GM12878 (cell line): ENCODE measurements at regions of chr2 and their contacts with region 1.

Region 1: DNA sequence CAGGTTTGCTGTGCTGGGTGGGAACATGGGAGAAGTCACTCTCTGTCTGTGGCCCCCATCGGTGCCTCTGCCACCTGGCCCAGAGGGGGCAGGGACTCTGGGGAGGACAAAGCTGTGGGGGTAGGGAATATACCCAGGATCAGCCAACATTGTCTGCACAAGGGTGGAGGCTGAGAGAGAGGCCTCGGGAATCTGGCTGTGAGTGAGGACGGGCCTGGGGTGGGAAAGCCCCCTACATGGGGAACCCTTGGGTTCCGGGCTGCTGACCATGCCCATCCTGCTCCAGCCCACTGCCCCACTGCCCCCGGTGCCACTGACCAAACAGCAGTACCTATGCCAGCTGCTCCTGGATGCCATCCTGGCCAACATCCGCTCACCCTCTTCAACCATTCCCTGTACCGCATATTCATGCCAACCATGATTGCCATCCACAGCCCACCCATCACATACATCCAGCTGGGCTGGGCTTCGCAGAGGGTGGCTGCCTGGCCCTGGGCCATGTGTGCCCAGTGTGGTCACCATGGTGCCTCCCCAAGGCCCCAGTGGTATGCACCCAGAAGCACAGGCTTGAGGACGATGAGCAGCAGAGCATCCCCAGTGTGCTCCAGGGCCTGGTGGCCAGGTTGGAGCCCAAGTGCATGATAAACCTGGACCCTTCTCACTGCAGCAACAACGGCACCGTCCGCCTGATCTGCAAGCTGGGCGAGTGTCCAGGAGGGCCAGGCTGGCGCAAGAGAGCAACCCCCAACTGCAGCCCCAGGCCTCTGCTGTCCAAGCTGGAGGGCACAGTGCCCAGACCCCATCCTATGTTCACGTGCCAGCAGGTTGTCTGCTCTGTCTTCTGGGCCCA is 6.9 kb upstream of the POTEF start:
- DNase-seq: no peak
- ATAC-seq: no peak
- H3K4me3 ChIP-seq: no peak overlapping the region
- H3K27ac ChIP-seq: no peak overlapping the region
- H3K4me1 ChIP-seq: no peaks in the 10 kb centered on the region
- H3K27me3 ChIP-seq: no peaks in the 10 kb centered on the region
- CTCF ChIP-seq: no peak
- EP300 ChIP-seq: no peak
- POLR2A ChIP-seq: no peak
- RAD21 ChIP-seq: no peak

Region 2: DNA sequence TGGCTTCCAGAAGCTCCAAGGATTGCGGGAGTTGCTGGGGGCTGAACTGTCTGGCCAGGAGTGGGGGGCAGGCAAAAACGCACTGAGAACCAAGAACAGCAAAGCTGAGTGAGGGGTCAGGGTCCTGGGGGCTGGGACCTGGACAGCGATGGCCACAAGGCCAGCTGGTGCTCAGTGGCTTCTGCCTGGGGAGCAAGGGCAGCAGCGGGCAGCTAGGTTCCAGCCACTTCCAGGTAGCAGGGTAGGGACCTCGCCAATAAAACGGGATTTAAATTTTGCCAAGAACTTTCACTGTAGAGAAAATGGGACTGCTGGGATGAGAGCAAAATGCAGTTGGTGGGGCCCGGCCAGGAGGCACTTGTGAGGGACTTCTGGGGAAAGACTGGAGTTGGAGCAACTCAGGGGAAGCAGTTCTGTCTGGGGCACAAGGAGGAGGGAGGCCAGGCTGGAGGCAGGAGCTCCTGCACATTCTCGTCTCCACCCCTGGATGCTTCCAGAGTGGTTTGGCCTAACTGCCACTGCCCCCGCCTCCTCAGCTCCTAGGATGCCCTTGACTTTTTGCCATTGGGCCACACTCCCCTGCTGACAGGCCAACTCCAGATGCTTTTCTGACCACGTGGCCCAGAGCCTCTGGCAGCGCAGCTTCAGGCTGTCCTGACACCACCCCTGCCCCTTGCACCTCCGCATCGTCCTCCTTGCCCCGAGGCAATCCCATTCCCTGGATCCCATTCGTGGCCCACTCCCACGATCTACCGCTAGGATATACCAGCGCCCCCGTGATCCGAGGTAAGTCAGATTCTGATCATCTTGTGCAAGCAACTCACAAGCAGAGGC is 1386.3 kb after region 1 on chr2:
- CTCF ChIA-PET with region 1: no interaction called
- POLR2A ChIA-PET with region 1: no interaction called
- RAD21 ChIA-PET with region 1: no interaction called
- SMC1A ChIA-PET with region 1: no interaction called
- in situ Hi-C with region 1: loop called (anchors 5 kb)
- intact Hi-C with region 1: no loop called
- DNase-seq: no peak
- ATAC-seq: peak; percentile 11; the same call in 1 of the 3 replicates
- H3K4me3 ChIP-seq: no peak overlapping the region
- H3K27ac ChIP-seq: no peak overlapping the region
- H3K4me1 ChIP-seq: no peaks in the 10 kb centered on the region
- H3K27me3 ChIP-seq: no peaks in the 10 kb centered on the region
- CTCF ChIP-seq: no peak
- EP300 ChIP-seq: no peak
- POLR2A ChIP-seq: no peak; the same call in 1 of the 2 replicates
- RAD21 ChIP-seq: no peak

Region 3: GRCh38 chr2:131543371-131543891 is 1407.5 kb after region 1 on chr2:
- CTCF ChIA-PET with region 1: no interaction called
- POLR2A ChIA-PET with region 1: no interaction called
- RAD21 ChIA-PET with region 1: no interaction called
- SMC1A ChIA-PET with region 1: no interaction called
- in situ Hi-C with region 1: no loop called
- intact Hi-C with region 1: loop called (anchors 5 kb)
- DNase-seq: no peak
- ATAC-seq: no peak
- H3K4me3 ChIP-seq: no peak overlapping the region
- H3K27ac ChIP-seq: no peak overlapping the region
- H3K4me1 ChIP-seq: no peaks in the 10 kb centered on the region
- H3K27me3 ChIP-seq: no peaks in the 10 kb centered on the region
- CTCF ChIP-seq: no peak
- EP300 ChIP-seq: no peak
- POLR2A ChIP-seq: no peak
- RAD21 ChIP-seq: no peak

Region 4: GRCh38 chr2:131557558-131558321 is 1421.8 kb after region 1 on chr2:
- CTCF ChIA-PET with region 1: no interaction called
- POLR2A ChIA-PET with region 1: no interaction called
- RAD21 ChIA-PET with region 1: no interaction called
- SMC1A ChIA-PET with region 1: no interaction called
- in situ Hi-C with region 1: loop called (anchors 5 kb)
- intact Hi-C with region 1: no loop called
- DNase-seq: no peak
- ATAC-seq: peak; percentile 77
- H3K4me3 ChIP-seq: peak overlapping the region; percentile 59
- H3K27ac ChIP-seq: peak overlapping the region; percentile 65
- H3K4me1 ChIP-seq: peaks cover 5% of the 10 kb centered on the region
- H3K27me3 ChIP-seq: no peaks in the 10 kb centered on the region
- CTCF ChIP-seq: no peak
- EP300 ChIP-seq: no peak
- POLR2A ChIP-seq: no peak
- RAD21 ChIP-seq: no peak